B cell (primary cell): ENCODE measurements at regions of chr11 and their contacts with region 1.

Region 1: DNA sequence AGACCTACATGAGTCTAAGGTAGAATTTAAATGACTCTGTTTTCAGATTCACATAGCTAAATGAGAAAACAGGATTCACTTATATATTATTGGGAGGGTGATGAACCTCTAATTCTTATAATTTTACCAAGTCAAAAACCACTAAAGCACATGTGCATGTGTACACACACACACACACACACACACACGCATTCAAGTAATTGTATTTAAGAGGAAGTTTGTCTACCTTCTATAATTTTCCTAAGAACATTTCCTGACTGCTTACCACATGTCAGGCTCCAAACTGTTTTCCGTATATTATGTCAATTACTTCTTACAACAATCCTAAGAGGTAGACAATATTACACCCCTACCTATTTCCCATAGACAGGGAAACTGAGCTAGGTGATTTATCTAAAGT is 6.7 kb downstream of the RNF141 start:
- DNase-seq: peak; percentile 54
- ATAC-seq: no peak
- H3K4me3 ChIP-seq: no peak overlapping the region
- H3K4me3 Mint-ChIP-seq: no peak overlapping the region
- H3K27ac ChIP-seq: peak overlapping the region in 1 of 2 donors; percentile 38
- H3K27ac Mint-ChIP-seq: no peak overlapping the region
- H3K4me1 ChIP-seq: peaks cover 24 to 39% of the 10 kb centered on the region in 2 donors
- H3K4me1 Mint-ChIP-seq: peaks cover 53% of the 10 kb centered on the region
- H3K27me3 ChIP-seq: no peaks in the 10 kb centered on the region
- H3K27me3 Mint-ChIP-seq: no peaks in the 10 kb centered on the region
- CTCF ChIP-seq: no peak

Region 2: GRCh38 chr11:9455722-9456121 is 1078.6 kb before region 1 on chr11:
- CTCF ChIA-PET with region 1: no interaction called
- POLR2A ChIA-PET with region 1: no interaction called
- intact Hi-C with region 1: no loop called
- DNase-seq: no peak
- ATAC-seq: no peak
- H3K4me3 ChIP-seq: no peak overlapping the region
- H3K4me3 Mint-ChIP-seq: no peak overlapping the region
- H3K27ac ChIP-seq: no peak overlapping the region
- H3K27ac Mint-ChIP-seq: no peak overlapping the region
- H3K4me1 ChIP-seq: peaks cover 7% of the 10 kb centered on the region in 2 donors
- H3K4me1 Mint-ChIP-seq: peaks cover 6% of the 10 kb centered on the region
- H3K27me3 ChIP-seq: no peaks in the 10 kb centered on the region
- H3K27me3 Mint-ChIP-seq: no peaks in the 10 kb centered on the region
- CTCF ChIP-seq: no peak

Region 3: DNA sequence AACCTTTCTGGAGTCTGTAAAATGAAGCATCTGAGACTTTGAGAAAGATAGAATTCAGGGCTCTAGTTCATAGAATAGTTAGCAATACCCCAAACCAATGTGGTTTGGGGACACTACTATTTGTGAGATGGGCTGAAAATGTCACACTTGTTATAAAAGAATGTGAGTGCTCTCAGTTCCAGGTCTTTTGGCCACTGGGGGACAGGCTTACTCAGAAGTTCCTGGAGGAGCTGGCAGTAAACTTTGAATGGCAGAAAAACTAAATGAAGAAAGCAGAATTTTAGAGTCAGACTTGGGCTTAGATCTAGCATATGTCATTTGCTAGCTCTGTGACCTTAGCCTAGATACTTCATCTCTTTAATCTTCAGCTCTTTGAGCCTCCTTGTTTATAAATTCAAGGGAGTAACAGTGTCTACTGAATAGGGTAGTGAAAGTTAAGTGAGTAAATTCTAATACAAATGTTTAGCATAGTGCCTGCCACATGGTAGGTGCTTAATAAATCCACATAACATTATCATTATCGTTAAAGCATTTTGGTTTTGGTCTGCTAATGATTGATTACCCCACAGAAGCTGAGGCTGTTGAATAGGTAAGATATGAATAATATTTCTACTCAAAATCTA is 30.5 kb after region 1 on chr11:
- CTCF ChIA-PET with region 1: interaction called, 3 read pairs
- POLR2A ChIA-PET with region 1: no interaction called
- intact Hi-C with region 1: loop called (anchors 5 kb)
- DNase-seq: peak; percentile 55
- ATAC-seq: peak; percentile 43
- H3K4me3 ChIP-seq: no peak overlapping the region
- H3K4me3 Mint-ChIP-seq: no peak overlapping the region
- H3K27ac ChIP-seq: peak overlapping the region in 1 of 2 donors; percentile 14
- H3K27ac Mint-ChIP-seq: peak overlapping the region; percentile 71
- H3K4me1 ChIP-seq: peaks cover 17 to 35% of the 10 kb centered on the region in 2 donors
- H3K4me1 Mint-ChIP-seq: peaks cover 53% of the 10 kb centered on the region
- H3K27me3 ChIP-seq: no peaks in the 10 kb centered on the region
- H3K27me3 Mint-ChIP-seq: no peaks in the 10 kb centered on the region
- CTCF ChIP-seq: peak; percentile 22